Endothelial cell of umbilical vein (primary cell): ENCODE measurements at regions of chr9 and their contacts with region 1.

Region 1: GRCh38 chr9:99184475-99185347 is 37.0 kb downstream of the ALG2 start:
- DNase-seq: peak; percentile 99
- H3K4me3 ChIP-seq: peak overlapping the region in 2 of 3 experiments; percentile 20 to 25
- H3K27ac ChIP-seq: peak overlapping the region; percentile 88
- H3K4me1 ChIP-seq: peaks cover 10% of the 10 kb centered on the region
- H3K27me3 ChIP-seq: peaks cover 3 to 5% of the 10 kb centered on the region in 2 experiments
- CTCF ChIP-seq: peak; percentile 94 to 97
- POLR2A ChIP-seq: peak; percentile 50

Region 2: GRCh38 chr9:99197987-99198386 is 13.3 kb after region 1 on chr9:
- CTCF ChIA-PET with region 1: interaction called, 20 read pairs
- POLR2A ChIA-PET with region 1: no interaction called
- dilution Hi-C with region 1: no loop called
- intact Hi-C with region 1: no loop called
- DNase-seq: no peak
- H3K4me3 ChIP-seq: no peak overlapping the region
- H3K27ac ChIP-seq: no peak overlapping the region
- H3K4me1 ChIP-seq: no peaks in the 10 kb centered on the region
- H3K27me3 ChIP-seq: peaks cover 0 to 13% of the 10 kb centered on the region in 2 experiments
- CTCF ChIP-seq: no peak
- POLR2A ChIP-seq: no peak

Region 3: DNA sequence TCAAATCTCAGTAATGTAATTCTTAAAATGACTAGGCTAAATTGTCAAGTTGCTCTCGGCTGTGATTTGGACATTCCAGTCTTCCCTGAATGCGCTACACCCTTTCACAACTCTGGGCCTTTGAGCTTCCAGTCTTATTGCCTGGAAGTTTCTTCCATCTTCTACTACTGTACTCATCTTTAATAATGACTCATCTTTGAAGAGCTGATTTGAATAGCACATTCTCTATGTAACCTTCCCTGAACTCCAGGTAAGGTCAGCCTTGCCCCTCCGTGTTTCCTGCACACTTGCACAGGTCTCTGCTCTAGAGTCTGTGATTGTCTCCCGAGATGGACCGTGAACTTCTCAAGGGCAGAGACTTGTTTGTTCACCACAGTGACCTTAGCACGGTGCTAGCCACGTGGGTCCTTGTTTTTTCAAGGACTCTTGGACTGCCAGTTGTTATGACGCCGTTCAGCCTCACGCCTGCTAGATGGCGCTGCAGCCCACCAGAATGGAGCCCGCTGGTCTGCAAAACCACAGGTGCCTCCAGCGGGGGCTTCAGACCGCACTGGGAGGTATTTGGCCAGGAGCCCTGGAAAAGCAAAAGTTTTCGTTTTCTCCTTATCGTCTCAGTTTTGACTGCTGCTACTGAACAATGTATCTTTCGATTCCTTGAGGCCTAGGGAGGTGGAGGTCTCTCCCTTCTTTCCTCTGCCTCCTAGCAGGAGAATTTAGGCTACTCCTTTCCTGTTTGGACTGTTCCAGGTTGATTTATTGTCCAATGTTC is 81.7 kb after region 1 on chr9:
- CTCF ChIA-PET with region 1: interaction called, 16 read pairs
- POLR2A ChIA-PET with region 1: no interaction called
- dilution Hi-C with region 1: no loop called
- intact Hi-C with region 1: loop called (anchors 1 kb)
- DNase-seq: peak; percentile 75
- H3K4me3 ChIP-seq: no peak overlapping the region
- H3K27ac ChIP-seq: no peak overlapping the region
- H3K4me1 ChIP-seq: peaks cover 20% of the 10 kb centered on the region
- H3K27me3 ChIP-seq: no peaks in the 10 kb centered on the region
- CTCF ChIP-seq: peak; percentile 89 to 91
- POLR2A ChIP-seq: no peak

Region 4: DNA sequence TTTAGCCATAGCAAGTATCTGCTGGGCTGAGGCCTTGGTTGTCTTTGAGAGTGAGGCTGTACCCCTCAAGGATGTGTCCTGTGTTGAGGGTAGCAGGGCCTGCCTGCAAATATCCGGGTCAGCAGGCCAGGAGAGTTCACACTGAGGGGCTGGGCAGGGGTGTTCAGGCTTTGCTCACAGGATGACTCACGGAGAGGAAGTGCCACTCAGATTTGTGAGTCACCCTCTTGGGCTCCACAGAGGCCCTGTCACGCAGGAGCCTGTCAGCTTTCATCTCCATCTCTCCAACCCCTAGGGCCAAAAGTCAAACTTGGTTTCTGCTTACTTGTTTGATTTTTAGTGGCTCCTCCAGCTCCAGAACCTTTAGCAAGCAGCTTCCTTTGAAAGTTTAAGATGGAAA is 248.8 kb after region 1 on chr9:
- CTCF ChIA-PET with region 1: interaction called, 4 read pairs
- POLR2A ChIA-PET with region 1: no interaction called
- dilution Hi-C with region 1: no loop called
- intact Hi-C with region 1: loop called (anchors 5 kb)
- DNase-seq: peak; percentile 80
- H3K4me3 ChIP-seq: no peak overlapping the region
- H3K27ac ChIP-seq: peak overlapping the region; percentile 84
- H3K4me1 ChIP-seq: peaks cover 30% of the 10 kb centered on the region
- H3K27me3 ChIP-seq: no peaks in the 10 kb centered on the region
- CTCF ChIP-seq: no peak
- POLR2A ChIP-seq: no peak

Region 5: DNA sequence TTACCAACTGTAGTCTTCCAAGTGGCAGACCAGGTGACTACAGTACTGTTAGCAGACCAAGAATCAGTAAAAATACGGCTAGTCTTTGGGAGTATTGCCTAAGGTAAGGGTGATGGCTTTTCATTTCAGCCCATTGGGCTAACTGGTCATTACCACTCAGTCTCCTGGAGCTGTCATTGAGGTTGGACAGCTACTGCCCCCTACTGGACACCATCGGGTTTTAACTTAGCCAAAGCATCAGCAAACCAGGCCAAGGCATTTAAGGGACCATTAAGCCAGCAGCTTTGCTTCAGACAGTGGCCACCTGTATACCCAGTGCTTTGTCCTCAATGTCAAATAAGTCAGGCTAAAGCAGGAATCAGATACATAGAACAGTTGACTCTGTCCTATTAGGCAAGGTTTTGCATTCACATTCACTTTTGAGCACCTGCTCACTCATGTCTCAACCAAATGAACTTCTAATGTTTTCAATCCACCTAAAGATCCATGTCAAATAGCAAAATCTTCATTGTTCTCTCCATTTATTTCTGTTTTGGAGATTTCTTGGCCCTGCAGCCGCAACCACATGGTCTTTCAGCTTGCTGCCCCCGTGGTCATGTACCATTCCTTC is 1031.6 kb after region 1 on chr9:
- CTCF ChIA-PET with region 1: interaction called, 4 read pairs
- POLR2A ChIA-PET with region 1: no interaction called
- dilution Hi-C with region 1: no loop called
- intact Hi-C with region 1: loop called (anchors 1 kb)
- DNase-seq: peak; percentile 61
- H3K4me3 ChIP-seq: no peak overlapping the region
- H3K27ac ChIP-seq: no peak overlapping the region
- H3K4me1 ChIP-seq: no peaks in the 10 kb centered on the region
- H3K27me3 ChIP-seq: no peaks in the 10 kb centered on the region
- CTCF ChIP-seq: peak; percentile 72 to 76
- POLR2A ChIP-seq: no peak